ENCODE measurements at regions of chr12 and their contacts with region 1.

Region 1: GRCh38 chr12:88299567-88300101 is 157.5 kb downstream of the TMTC3 start:
- DNase-seq: peak; percentile 29
- H3K4me3 Mint-ChIP-seq: no peak overlapping the region
- H3K27ac Mint-ChIP-seq: peak overlapping the region; percentile 76
- H3K4me1 Mint-ChIP-seq: peaks cover 35% of the 10 kb centered on the region
- H3K27me3 Mint-ChIP-seq: no peaks in the 10 kb centered on the region

Region 2: GRCh38 chr12:88141770-88142609 is 157.6 kb before region 1 on chr12 and contains the starts of genes CEP290 and TMTC3:
- intact Hi-C with region 1: loop called (anchors 1 kb)
- DNase-seq: peak; percentile 92
- H3K4me3 Mint-ChIP-seq: peak within 1 kb of the TSS; percentile 91
- H3K27ac Mint-ChIP-seq: peak within 1 kb of the TSS; percentile 95
- H3K4me1 Mint-ChIP-seq: peaks cover 34% of the 10 kb centered on the region
- H3K27me3 Mint-ChIP-seq: no peaks in the 10 kb centered on the region
- total RNA-seq, gene CEP290: 15.5 and 17.0 TPM in 2 replicates
- total RNA-seq, gene TMTC3: 6.9 and 7.1 TPM in 2 replicates

Region 3: GRCh38 chr12:88207921-88208620 is 91.6 kb before region 1 on chr12:
- intact Hi-C with region 1: no loop called
- DNase-seq: no peak
- H3K4me3 Mint-ChIP-seq: no peak overlapping the region
- H3K27ac Mint-ChIP-seq: no peak overlapping the region
- H3K4me1 Mint-ChIP-seq: no peaks in the 10 kb centered on the region
- H3K27me3 Mint-ChIP-seq: no peaks in the 10 kb centered on the region

Region 4: GRCh38 chr12:88241862-88242570 is 57.6 kb before region 1 on chr12:
- intact Hi-C with region 1: loop called (anchors 1 kb)
- DNase-seq: no peak
- H3K4me3 Mint-ChIP-seq: no peak overlapping the region
- H3K27ac Mint-ChIP-seq: peak overlapping the region; percentile 75
- H3K4me1 Mint-ChIP-seq: peaks cover 28% of the 10 kb centered on the region
- H3K27me3 Mint-ChIP-seq: no peaks in the 10 kb centered on the region

Region 5: DNA sequence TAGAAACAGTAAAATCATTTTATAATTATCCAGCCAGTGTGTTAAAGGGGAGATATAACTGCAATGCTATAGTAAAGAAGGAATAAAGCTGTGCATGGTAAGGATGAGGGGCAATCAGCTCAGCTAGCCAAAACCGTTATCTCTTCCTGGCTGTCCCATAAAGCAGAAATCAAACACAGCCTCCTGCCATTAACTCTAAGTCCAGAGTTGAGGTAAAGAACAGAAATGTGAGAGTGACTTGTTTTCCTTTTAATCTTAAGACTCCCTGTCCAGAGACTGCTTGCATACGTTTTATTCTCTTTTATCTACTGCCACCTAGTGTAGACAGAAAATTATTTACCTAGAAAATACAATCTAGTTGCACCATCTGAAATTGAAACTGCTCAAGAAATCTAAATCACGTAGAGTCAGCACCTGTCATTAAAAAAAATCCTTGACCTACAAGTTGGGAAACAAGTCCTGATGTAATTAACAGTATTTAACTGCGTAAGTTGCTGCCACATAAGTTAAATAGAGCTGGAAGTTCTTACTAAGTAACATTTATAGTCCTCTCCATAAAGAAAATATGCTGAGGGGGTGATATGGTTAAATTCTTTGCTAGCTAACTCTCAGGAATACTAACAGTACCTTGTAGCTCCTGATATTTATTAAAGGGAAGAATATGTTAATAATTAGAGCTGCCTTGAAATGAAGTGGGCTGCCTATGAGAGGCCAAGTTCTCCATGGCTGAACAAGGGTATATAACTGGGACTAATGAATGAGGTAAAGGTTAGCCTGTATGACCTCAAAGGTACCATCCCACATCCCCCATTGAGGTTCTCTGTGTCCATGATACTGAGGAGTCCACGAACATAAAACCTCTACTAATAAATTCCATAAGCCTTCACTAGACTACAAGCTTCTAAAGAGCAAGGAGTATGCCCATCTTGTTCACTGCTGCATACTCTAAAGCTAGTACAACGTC is 1162.3 kb after region 1 on chr12:
- intact Hi-C with region 1: loop called (anchors 10 kb)
- DNase-seq: no peak
- H3K4me3 Mint-ChIP-seq: peak overlapping the region; percentile 60
- H3K27ac Mint-ChIP-seq: peak overlapping the region; percentile 36
- H3K4me1 Mint-ChIP-seq: peaks cover 43% of the 10 kb centered on the region
- H3K27me3 Mint-ChIP-seq: no peaks in the 10 kb centered on the region

Region 6: DNA sequence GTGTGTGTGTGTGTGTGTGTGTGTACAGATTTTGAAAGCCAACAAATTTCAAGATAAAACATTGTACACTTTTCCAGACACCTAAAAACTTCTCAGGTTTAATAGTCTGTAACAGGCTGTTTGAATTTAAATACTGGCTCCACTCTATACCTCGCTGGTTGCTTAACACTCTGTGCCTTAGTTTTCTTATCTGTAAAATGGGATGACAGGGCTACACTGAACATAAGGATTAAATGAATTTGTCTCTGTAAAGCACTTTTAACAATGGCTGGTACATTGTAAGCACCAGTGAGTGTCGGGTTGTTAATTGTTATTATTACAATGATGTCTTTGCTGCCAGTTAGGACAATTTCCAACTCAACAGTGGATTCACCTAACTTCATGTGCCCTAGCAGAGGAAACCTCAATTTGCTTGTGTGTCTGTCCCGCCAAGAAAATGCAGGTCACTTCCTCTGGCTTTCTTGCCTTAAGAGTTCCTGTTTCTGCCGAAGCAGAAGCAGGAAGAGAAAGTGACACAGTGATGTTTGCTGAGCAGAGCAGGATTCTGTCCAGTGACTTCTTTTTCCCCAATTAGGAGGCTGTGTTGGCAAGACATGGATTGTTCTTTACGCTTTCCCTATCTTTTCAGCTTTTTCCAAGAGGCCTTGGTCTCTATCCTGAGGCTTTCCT is 1563.0 kb after region 1 on chr12:
- intact Hi-C with region 1: loop called (anchors 1 kb)
- DNase-seq: peak; percentile 44
- H3K4me3 Mint-ChIP-seq: peak overlapping the region; percentile 76
- H3K27ac Mint-ChIP-seq: peak overlapping the region; percentile 95
- H3K4me1 Mint-ChIP-seq: peaks cover 60% of the 10 kb centered on the region
- H3K27me3 Mint-ChIP-seq: no peaks in the 10 kb centered on the region

Measured in activated T-helper 1 cell treated with anti-CD3 and anti-CD28 coated beads, Interleukin-12 subunit alpha, Interleukin-12 subunit beta, Interleukin-2, Interleukin-4 antibody, amounts not matched to agents 30 ng/mL and 10 ng/mL and 1 ng/mL, durations not matched to agents 14 hours and 24 hours and 36 hours (primary cell).